ENCODE measurements at regions of chr7 and their contacts with region 1.

Region 1: GRCh38 chr7:139620676-139621344 is 97.3 kb downstream of the CLEC2L start:
- DNase-seq: peak; percentile 41 to 59
- H3K4me3 ChIP-seq: no peak overlapping the region
- H3K27ac ChIP-seq: no peak overlapping the region
- H3K4me1 ChIP-seq: peaks cover 0 to 5% of the 10 kb centered on the region in 2 donors
- H3K27me3 ChIP-seq: no peaks in the 10 kb centered on the region
- CTCF ChIP-seq: peak; percentile 19 to 71 (median 66)
- POLR2A ChIP-seq: no peak

Region 2: DNA sequence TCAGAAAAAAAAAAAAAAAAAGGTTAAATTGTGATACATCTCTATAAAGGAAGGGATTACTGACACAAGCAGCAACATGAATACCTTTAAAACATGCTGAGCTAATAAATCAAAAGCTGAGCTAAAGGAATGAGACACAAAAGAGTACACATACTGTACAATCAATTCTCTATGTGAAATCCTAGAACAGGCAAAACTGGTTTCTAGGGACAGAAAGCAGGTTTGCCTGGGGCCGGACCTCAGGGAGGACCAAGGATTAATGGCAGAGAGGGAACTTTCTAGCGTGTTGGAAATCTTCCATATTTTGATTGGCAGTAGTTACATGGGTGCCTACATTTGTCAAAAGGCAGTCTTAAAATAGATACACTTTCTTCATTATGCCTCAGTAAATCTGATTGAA is 189.8 kb before region 1 on chr7:
- intact Hi-C with region 1: no loop called
- DNase-seq: peak; percentile 47 to 71
- H3K4me3 ChIP-seq: no peak overlapping the region
- H3K27ac ChIP-seq: peak overlapping the region; percentile 92 to 97 (median 96)
- H3K4me1 ChIP-seq: peaks cover 62 to 77% of the 10 kb centered on the region in 2 donors
- H3K27me3 ChIP-seq: no peaks in the 10 kb centered on the region
- CTCF ChIP-seq: no peak
- POLR2A ChIP-seq: no peak

Region 3: GRCh38 chr7:139502226-139502625 is 118.6 kb before region 1 on chr7:
- intact Hi-C with region 1: loop called (anchors 5 kb)
- DNase-seq: no peak
- H3K4me3 ChIP-seq: no peak overlapping the region
- H3K27ac ChIP-seq: no peak overlapping the region
- H3K4me1 ChIP-seq: no peaks in the 10 kb centered on the region
- H3K27me3 ChIP-seq: no peaks in the 10 kb centered on the region
- CTCF ChIP-seq: no peak
- POLR2A ChIP-seq: no peak